ENCODE measurements at regions of chr3 and their contacts with region 1.

Region 1: DNA sequence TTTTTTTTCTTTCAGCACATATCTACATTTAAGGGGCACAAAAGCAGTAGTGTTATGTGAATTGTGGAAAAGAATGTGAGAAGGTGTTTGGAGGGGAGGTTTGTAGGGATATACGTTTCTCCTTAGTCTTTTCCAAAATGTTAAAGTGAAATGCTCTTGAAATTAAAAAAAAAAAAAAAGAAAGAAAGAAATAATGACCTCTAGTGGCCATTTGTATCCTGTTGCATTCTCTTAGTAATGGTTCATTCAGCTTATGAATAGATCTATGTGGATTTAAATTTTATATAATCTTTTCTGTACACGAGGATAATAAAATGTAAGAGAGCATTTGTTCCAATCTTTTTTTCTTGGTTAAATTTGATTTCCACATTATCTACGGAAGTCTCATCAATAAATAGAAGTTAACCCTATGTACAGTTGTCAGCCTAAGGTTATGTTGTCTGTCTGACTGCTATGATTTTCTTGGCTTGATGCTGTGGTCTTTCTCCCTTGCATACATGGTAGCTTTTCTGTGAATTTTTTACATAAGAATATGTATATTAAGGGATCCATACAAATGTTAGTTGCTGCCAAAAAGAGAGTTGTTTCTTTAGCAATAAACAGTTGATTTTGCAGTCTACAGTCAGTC is 1.7 kb downstream of the P2RY13 start:
- DNase-seq: no peak
- H3K4me3 ChIP-seq: no peak overlapping the region
- H3K27ac ChIP-seq: no peak overlapping the region
- H3K4me1 ChIP-seq: peaks cover 21% of the 10 kb centered on the region
- H3K27me3 ChIP-seq: no peaks in the 10 kb centered on the region
- CTCF ChIP-seq: peak; percentile 55 to 61

Region 2: DNA sequence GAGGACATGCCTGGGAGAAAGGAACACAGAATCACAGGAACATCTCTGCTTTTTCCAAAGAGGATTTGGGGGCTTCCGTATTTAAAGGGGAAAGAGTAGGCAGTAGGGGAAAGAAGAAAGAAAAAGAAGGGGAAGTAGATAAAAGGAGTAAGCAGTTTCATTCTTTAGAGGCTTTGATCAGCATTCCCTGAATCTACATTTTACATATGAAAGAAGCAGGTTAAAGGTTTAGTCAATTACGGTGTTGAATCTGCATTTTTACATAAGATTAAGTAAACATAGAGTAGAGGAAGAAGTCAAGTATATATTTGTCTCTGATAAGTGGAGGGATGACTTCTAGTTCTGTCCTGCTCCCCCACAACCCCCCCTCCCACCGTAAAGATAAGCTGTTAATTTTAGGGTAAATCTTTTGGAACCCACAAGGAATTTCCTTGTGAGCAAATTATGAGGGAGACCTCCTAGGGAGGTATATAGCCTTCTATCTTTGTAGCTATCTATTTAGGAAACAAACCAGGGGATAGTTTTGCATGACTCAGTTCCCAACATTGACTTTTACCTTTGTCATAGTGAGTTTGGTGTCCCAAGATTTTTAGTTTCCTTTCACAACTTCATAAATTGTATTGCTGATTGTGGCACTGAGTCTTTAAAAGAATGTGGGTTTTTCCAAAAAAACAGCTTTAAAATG is 65.6 kb after region 1 on chr3:
- CTCF ChIA-PET with region 1: no interaction called
- dilution Hi-C with region 1: loop called (anchors 5 kb)
- in situ Hi-C with region 1: no loop called
- intact Hi-C with region 1: no loop called
- DNase-seq: no peak
- H3K4me3 ChIP-seq: no peak overlapping the region
- H3K27ac ChIP-seq: no peak overlapping the region
- H3K4me1 ChIP-seq: peaks cover 18% of the 10 kb centered on the region
- H3K27me3 ChIP-seq: no peaks in the 10 kb centered on the region
- CTCF ChIP-seq: no peak

Measured in mammary epithelial cell (primary cell).